T-cell (primary cell): ENCODE measurements at regions of chr5 and their contacts with region 1.

Region 1: DNA sequence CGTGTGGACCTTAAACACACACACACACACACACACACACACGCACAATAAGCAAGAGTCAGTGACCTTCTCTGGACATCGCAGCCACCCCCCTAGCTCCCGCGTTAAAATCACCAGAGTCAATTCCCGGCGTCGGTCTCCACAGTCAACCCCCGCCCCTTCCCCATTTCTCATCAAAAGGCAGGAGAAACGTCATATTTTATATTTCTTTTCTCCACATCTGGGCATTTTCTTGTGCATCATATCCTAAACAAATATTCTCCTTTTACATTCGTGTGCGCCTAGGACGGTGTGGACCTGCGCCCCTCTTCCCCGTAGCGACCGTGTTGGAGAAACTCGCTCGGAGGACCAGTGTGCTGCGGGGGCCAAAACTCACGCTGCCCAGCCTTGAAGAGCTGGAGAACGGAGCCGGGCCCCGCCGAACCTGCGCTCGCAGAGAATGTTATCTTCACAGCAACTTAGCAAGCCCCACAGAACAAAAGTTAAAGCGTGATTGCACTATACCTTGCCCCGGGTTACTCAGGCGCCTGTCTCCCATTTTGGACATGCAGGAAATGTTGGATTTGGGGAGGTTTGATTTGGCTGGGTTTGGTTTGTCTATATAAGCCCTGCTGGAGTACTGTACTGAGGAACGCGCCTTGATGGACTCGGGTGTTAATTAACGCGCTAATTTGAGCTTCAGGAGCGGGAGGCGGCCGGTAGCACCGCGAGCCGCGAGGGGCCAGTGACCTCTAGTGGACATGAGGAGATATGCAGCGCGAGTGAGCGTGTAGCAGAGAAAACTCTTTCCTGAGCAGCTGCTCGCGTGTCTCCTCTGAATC is 192.4 kb downstream of the MEF2C start:
- DNase-seq: peak in 34 of 35 experiments; percentile 28 to 80 (median 53)
- ATAC-seq: peak; percentile 85 to 89 (median 86)
- H3K4me3 ChIP-seq: peak overlapping the region in 1 of 2 donors; percentile 60
- H3K4me3 Mint-ChIP-seq: peak overlapping the region; percentile 54 to 66 (median 55)
- H3K27ac ChIP-seq: no peak overlapping the region
- H3K27ac Mint-ChIP-seq: peak overlapping the region in 1 of 2 donors; percentile 32
- H3K4me1 ChIP-seq: peaks cover 0 to 30% of the 10 kb centered on the region in 2 experiments
- H3K4me1 Mint-ChIP-seq: peaks cover 13 to 25% (median 16%) of the 10 kb centered on the region in 3 donors
- H3K27me3 ChIP-seq: peaks cover 40 to 77% of the 10 kb centered on the region in 2 experiments
- H3K27me3 Mint-ChIP-seq: peaks cover 76 to 95% of the 10 kb centered on the region in 2 donors

Region 2: GRCh38 chr5:87780831-87781760 is 909.5 kb before region 1 on chr5:
- CTCF ChIA-PET with region 1: interaction called, 23 to 74 read pairs
- POLR2A ChIA-PET with region 1: no interaction called
- DNase-seq: peak; percentile 33 to 89 (median 70)
- ATAC-seq: peak; percentile 85 to 99 (median 92)
- H3K4me3 ChIP-seq: no peak overlapping the region
- H3K4me3 Mint-ChIP-seq: no peak overlapping the region
- H3K27ac ChIP-seq: no peak overlapping the region
- H3K27ac Mint-ChIP-seq: no peak overlapping the region
- H3K4me1 ChIP-seq: no peaks in the 10 kb centered on the region
- H3K4me1 Mint-ChIP-seq: peaks cover 0 to 3% (median 3%) of the 10 kb centered on the region in 3 donors
- H3K27me3 ChIP-seq: peaks cover 0 to 8% of the 10 kb centered on the region in 2 experiments
- H3K27me3 Mint-ChIP-seq: peaks cover 25 to 43% of the 10 kb centered on the region in 2 donors

Region 3: GRCh38 chr5:88140856-88141752 is 549.5 kb before region 1 on chr5:
- CTCF ChIA-PET with region 1: no interaction called
- POLR2A ChIA-PET with region 1: interaction called in 1 of 2 experiments, 12 read pairs
- DNase-seq: peak; percentile 30 to 89 (median 78)
- ATAC-seq: peak; percentile 81 to 92 (median 87)
- H3K4me3 ChIP-seq: peak overlapping the region; percentile 37 to 44
- H3K4me3 Mint-ChIP-seq: no peak overlapping the region
- H3K27ac ChIP-seq: no peak overlapping the region
- H3K27ac Mint-ChIP-seq: no peak overlapping the region
- H3K4me1 ChIP-seq: peaks cover 3 to 48% of the 10 kb centered on the region in 2 experiments
- H3K4me1 Mint-ChIP-seq: peaks cover 17 to 21% (median 20%) of the 10 kb centered on the region in 3 donors
- H3K27me3 ChIP-seq: peaks cover 14 to 56% of the 10 kb centered on the region in 2 experiments
- H3K27me3 Mint-ChIP-seq: peaks cover 5 to 17% of the 10 kb centered on the region in 2 donors

Region 4: GRCh38 chr5:88657136-88657535 is 33.5 kb before region 1 on chr5:
- CTCF ChIA-PET with region 1: interaction called, 6 to 10 read pairs
- POLR2A ChIA-PET with region 1: no interaction called
- DNase-seq: no peak
- ATAC-seq: no peak
- H3K4me3 ChIP-seq: no peak overlapping the region
- H3K4me3 Mint-ChIP-seq: no peak overlapping the region
- H3K27ac ChIP-seq: no peak overlapping the region
- H3K27ac Mint-ChIP-seq: no peak overlapping the region
- H3K4me1 ChIP-seq: peaks cover 0 to 20% of the 10 kb centered on the region in 2 experiments
- H3K4me1 Mint-ChIP-seq: peaks cover 11 to 14% (median 13%) of the 10 kb centered on the region in 3 donors
- H3K27me3 ChIP-seq: peaks cover 17 to 20% of the 10 kb centered on the region in 2 experiments
- H3K27me3 Mint-ChIP-seq: peaks cover 33 to 54% of the 10 kb centered on the region in 2 donors

Region 5: DNA sequence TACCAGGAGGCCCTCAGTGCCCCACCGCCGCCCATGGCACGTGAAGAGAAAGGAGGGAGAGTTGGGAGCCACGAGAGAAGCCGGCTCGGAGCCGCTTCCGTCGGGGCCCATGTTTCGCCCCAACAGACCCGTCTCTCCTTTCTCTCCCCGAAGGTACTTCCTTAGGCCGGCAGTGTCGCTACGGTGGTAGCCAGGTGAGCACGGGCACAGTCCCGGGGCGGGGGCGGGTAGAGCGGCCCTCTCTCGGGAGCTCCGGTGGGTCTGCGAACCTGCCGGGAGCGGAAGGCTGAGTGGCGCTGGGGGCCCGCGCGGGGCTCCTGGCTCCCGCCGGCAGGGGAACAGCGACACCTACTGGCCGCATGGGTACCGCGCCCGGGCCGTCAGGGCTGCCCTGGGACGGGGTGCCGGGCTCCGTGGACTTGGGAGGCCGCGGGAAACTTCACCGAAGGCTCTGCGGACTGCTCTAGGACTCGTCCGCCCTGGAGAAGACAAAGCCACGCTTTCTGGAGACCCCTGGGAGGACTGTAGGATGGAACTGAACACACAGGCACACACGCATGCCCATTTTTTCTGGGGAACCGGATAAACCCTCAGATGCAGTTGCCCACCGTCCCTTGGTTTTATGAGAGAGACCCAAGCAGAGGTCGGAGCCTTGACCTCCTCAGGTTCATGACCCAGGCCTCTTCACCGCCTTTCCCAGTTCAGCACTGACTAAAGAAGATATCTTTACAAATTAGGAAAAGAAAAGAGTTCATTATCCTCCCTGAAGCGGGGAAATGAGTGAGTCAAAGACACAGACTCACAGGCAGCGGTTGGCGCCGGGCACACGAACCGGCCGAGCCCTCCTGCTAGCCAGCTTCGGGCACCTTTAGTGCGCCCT is 10.1 kb before region 1 on chr5:
- CTCF ChIA-PET with region 1: interaction called, 8 to 10 read pairs
- POLR2A ChIA-PET with region 1: no interaction called
- DNase-seq: peak; percentile 35 to 84 (median 68)
- ATAC-seq: peak; percentile 83 to 88 (median 88)
- H3K4me3 ChIP-seq: peak overlapping the region; percentile 30 to 38
- H3K4me3 Mint-ChIP-seq: peak overlapping the region in 2 of 3 donors; percentile 39 to 44
- H3K27ac ChIP-seq: no peak overlapping the region
- H3K27ac Mint-ChIP-seq: peak overlapping the region in 1 of 2 donors; percentile 27
- H3K4me1 ChIP-seq: peaks cover 0 to 31% of the 10 kb centered on the region in 2 experiments
- H3K4me1 Mint-ChIP-seq: peaks cover 22 to 42% (median 28%) of the 10 kb centered on the region in 3 donors
- H3K27me3 ChIP-seq: peaks cover 37 to 72% of the 10 kb centered on the region in 2 experiments
- H3K27me3 Mint-ChIP-seq: peaks cover 64 to 83% of the 10 kb centered on the region in 2 donors